Mammary epithelial cell (primary cell): ENCODE measurements at regions of chr5 and their contacts with region 1.

Region 1: DNA sequence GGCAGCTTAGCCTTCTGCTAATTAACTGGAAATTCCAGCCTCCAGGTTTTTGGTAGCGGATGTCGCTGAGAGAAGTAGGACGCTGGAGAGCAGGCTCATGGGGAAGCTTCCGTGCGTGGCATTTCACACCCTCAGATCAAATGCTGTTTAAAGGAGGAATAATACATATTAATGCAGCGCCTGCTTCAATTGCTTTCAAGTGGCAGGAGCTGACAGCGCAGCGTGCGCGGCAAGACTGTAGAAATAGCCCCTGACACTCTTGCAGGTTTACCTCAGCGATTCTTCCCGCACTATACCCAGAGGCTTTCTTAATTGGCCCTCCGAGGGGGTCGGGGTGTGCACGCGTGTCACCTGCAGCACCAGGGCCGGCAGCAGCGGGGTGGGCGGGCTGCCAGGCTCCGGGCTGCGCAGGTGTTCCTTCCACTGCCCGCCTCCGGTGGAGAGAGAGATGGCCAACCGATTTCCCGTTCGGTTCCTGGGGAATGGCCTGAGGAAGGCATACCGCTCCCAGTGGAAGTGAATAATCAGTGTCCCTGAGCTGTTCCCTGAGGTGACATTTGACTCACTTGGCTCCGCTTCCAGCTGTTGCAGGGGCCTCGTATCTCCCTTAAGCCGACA is 427.9 kb downstream of the KCTD16 start:
- DNase-seq: no peak
- H3K4me3 ChIP-seq: peak overlapping the region in 1 of 3 experiments; percentile 35
- H3K27ac ChIP-seq: no peak overlapping the region
- H3K4me1 ChIP-seq: no peaks in the 10 kb centered on the region
- H3K27me3 ChIP-seq: no peaks in the 10 kb centered on the region
- CTCF ChIP-seq: peak in 1 of 2 donors; percentile 9

Region 2: DNA sequence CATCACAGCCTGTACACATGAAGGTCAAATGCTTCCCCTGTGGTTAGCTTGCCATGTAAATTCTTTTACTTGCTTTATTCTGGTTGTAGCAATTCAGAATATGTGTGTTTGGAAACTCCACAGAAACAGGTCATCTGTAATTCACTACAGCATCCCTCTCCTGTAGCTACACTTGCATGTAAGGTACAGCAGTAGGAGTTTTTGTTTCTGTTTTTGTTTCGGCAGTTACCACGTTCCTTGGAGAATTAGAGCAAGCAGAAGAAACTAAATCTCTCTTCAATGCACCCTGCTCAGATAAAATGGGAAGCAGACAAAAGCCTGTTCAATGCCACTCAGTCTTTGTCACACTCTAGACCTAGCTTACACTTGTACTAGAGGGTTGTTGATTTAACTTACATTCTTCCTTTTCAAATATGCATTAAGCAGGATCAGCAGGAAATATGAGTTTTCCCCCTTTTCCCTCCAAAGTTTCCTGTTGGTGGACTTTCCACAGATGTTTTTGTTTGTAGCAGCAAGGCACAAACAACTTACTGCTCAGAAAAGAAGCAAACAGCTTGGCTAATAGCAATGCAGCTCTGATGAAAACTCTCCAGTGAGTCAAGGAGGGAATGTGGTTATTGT is 509.0 kb before region 1 on chr5:
- CTCF ChIA-PET with region 1: no interaction called
- dilution Hi-C with region 1: no loop called
- in situ Hi-C with region 1: no loop called
- intact Hi-C with region 1: no loop called
- DNase-seq: no peak
- H3K4me3 ChIP-seq: no peak overlapping the region
- H3K27ac ChIP-seq: no peak overlapping the region
- H3K4me1 ChIP-seq: peaks cover 7% of the 10 kb centered on the region
- H3K27me3 ChIP-seq: no peaks in the 10 kb centered on the region
- CTCF ChIP-seq: no peak

Region 3: DNA sequence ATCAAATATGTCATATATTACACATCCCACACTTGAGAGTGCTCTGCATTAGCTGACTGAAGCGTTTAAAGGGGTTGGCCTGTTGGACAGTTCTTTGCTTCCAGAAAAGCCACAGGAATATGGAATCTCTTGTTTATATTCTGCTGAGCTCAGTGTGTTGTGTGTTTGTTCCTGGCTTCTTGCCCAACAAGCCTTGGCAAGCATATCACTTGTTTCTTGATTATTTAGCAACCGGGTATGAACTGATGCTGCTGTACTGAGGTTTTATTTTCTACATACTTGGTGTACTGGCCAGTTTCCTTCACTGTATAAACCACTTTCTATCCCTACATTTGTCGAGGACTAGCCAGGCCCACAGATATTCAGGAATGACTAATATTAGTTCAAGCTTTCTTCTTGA is 49.0 kb before region 1 on chr5:
- CTCF ChIA-PET with region 1: no interaction called
- dilution Hi-C with region 1: loop called (anchors 5 kb)
- in situ Hi-C with region 1: no loop called
- intact Hi-C with region 1: no loop called
- DNase-seq: no peak
- H3K4me3 ChIP-seq: no peak overlapping the region
- H3K27ac ChIP-seq: no peak overlapping the region
- H3K4me1 ChIP-seq: no peaks in the 10 kb centered on the region
- H3K27me3 ChIP-seq: no peaks in the 10 kb centered on the region
- CTCF ChIP-seq: no peak

Region 4: DNA sequence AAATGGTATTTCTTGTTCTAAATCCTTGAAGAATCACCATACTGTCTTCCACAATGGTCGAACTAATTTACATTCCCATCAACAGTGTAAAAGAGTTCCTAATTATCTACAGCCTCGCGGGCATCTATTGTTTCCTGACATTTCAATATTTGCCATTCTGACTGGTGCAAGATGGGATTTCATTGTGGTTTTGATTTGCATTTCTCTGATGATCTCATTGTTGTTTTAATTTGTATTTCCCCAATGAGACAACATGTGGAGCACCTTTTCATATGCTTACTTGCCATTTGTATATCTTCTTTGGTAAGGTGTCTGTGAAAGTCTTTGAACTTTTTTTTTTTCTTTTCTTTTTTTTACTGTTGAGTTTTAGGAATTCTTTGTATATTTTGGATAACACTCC is 45.8 kb after region 1 on chr5:
- CTCF ChIA-PET with region 1: no interaction called
- dilution Hi-C with region 1: no loop called
- in situ Hi-C with region 1: no loop called
- intact Hi-C with region 1: no loop called
- DNase-seq: no peak
- H3K4me3 ChIP-seq: no peak overlapping the region
- H3K27ac ChIP-seq: no peak overlapping the region
- H3K4me1 ChIP-seq: no peaks in the 10 kb centered on the region
- H3K27me3 ChIP-seq: peaks cover 3% of the 10 kb centered on the region
- CTCF ChIP-seq: no peak

Region 5: GRCh38 chr5:146533260-146533857 is 1934.8 kb after region 1 on chr5:
- CTCF ChIA-PET with region 1: no interaction called
- dilution Hi-C with region 1: no loop called
- in situ Hi-C with region 1: no loop called
- intact Hi-C with region 1: no loop called
- DNase-seq: peak; percentile 55
- H3K4me3 ChIP-seq: no peak overlapping the region
- H3K27ac ChIP-seq: no peak overlapping the region
- H3K4me1 ChIP-seq: peaks cover 2% of the 10 kb centered on the region
- H3K27me3 ChIP-seq: no peaks in the 10 kb centered on the region
- CTCF ChIP-seq: peak; percentile 89 to 94